ENCODE measurements at regions of chr2 and their contacts with region 1.

Region 1: DNA sequence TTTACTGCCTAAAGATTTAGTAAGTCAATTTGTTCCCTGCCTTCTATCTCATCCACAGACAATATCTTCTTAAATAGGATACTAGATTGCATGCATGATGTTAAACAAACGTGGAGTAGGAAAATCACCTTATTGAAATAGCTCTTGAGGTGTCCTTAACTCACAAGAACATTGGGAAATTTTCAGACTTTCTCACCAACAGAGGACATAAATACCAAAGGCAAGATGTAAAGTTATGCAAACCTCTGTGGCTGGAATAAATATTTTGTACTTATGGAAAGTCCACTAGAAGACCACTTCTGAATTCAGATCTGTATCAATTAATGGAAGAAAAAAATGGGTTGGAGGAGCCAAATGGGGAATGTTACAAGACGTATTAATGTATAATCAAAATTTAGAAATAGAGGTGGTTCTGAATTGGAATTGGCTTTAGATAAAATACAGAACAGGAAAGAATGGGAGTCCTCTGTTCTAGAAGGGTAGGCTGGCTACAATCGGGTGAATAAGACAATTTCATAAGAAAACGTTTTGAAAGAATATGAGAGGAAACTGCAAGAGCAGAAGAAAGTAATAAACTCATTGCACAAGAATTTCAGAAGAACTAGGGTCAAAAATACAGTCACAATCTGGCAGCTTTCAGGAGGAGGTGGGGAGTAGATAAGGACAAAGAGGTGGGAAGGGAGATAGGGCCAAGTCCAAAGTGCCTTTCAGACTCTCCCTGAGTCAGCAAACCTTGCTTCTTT is 69.3 kb upstream of the FN1 start:
- DNase-seq: no peak
- ATAC-seq: no peak
- H3K4me3 ChIP-seq: no peak overlapping the region
- H3K27ac ChIP-seq: no peak overlapping the region
- H3K4me1 ChIP-seq: no peaks in the 10 kb centered on the region; the same call in 1 of the 2 replicates
- H3K27me3 ChIP-seq: no peaks in the 10 kb centered on the region
- CTCF ChIP-seq: no peak

Region 2: DNA sequence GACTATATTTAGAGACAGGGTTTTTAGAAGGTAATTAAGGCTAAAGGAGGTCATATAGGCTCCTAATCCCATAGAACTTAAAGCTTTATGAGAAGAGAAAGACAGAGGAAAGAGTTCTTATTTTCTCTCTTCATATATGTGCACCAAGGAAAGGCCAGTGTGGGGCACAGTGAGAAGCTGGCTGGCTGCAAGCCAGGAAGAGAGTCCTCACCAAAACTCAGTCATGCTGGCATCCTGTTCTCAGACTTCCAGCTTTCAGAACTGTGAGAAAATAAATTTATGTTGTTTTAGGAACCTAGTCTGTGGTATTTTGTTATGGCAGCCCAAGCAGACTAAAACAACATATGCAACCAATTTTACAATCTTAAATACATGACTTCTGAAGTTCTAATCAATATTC is 224.9 kb before region 1 on chr2:
- CTCF ChIA-PET with region 1: no interaction called
- POLR2A ChIA-PET with region 1: no interaction called
- intact Hi-C with region 1: no loop called
- DNase-seq: no peak
- ATAC-seq: no peak
- H3K4me3 ChIP-seq: no peak overlapping the region
- H3K27ac ChIP-seq: no peak overlapping the region
- H3K4me1 ChIP-seq: 0 out of 2 replicates have a peak, but pooled peaks cover 5% of the 10 kb centered on the region
- H3K27me3 ChIP-seq: no peaks in the 10 kb centered on the region
- CTCF ChIP-seq: no peak

Region 3: DNA sequence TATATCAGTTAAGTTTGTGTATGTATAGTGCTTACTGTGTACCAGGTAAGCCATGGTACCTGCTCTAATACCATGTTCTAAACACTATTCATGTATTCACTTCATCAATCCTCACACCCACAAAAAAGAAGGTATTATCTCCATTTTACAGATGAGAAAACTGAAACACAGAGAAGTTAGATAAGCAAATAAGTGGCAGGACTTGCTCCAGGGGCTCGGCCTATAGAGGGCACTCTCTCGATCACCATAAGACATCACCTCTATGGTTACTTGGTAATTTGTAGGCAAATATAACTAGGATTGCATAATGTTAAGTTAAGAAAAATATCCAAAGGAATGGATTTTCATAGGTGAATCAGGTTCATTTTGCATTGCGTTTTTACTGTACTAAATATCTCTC is 48.7 kb after region 1 on chr2:
- CTCF ChIA-PET with region 1: no interaction called
- POLR2A ChIA-PET with region 1: no interaction called
- intact Hi-C with region 1: no loop called
- DNase-seq: no peak
- ATAC-seq: no peak; the same call in 1 of the 2 replicates
- H3K4me3 ChIP-seq: no peak overlapping the region
- H3K27ac ChIP-seq: peak overlapping the region; percentile 42
- H3K4me1 ChIP-seq: peaks cover 19% of the 10 kb centered on the region
- H3K27me3 ChIP-seq: no peaks in the 10 kb centered on the region
- CTCF ChIP-seq: peak; percentile 58

Region 4: DNA sequence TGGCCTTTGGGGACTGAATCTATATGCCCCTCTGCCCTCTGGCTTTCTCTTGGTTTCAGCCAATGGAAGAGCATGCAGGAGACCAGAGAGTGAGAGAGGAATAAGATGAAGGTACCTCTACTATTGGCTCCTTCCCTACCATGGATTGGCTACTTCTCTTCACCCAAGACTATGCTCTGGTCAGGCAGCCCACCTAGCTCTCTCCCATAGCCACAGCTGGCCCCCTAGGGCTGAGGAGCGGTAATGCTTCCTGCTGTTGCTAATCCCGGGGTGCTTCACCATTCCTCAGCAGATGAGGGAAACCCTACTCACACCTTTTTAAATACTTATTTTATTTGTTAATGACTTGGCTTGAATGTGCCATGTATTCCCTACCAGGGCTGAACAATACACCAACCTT is 365.8 kb after region 1 on chr2:
- CTCF ChIA-PET with region 1: interaction called, 3 read pairs
- POLR2A ChIA-PET with region 1: interaction called, 10 read pairs
- intact Hi-C with region 1: no loop called
- DNase-seq: peak; percentile 32
- ATAC-seq: peak; percentile 17; the same call in 1 of the 2 replicates
- H3K4me3 ChIP-seq: no peak overlapping the region
- H3K27ac ChIP-seq: no peak overlapping the region
- H3K4me1 ChIP-seq: peaks cover 15% of the 10 kb centered on the region
- H3K27me3 ChIP-seq: no peaks in the 10 kb centered on the region
- CTCF ChIP-seq: peak; percentile 58

Measured in PC-3 (cell line).